Aorta (tissue), 5 donors: ENCODE measurements at regions of chr18 and their contacts with region 1.

Region 1: DNA sequence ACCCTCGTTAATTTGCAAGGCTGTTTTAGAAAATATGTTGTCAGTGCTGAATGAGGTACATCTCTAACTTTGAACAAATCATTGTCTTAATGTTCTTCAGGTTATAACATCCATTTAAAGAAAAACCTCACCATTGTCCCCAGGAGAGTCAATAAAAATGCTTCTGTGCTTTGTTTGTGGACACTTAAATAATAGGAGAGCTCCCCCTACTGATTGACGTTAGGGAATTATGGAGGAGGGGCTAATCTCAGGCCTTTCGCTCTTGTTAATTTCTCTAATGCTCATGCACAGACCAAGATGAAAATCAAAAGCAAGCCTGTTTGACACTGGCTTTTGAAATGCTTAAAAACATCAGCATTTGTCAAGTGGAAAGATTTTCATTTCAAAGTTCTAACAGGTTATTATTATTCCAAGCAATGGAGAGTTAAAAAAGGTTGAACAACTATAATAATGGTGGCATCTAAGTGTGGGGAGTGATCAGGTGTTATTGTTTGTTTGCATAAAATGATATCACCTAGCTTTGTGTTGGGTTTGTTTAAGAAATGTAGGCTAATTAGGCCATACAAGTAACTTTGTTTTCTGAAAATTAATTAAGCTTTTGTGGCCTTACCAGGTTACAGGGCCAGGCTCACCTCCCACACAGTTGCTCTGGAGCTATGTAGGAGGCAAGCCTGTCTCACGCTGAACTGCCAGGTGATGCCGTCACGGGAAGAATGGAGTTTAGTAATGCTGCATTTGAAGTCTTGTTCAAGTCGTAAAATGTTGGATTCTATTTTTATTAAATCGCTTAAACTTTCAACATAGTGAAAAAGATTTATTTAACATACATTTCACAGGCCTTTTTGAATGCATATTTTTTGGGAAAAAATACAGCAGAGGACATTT is 51.7 kb upstream of the SMIM21 start:
- DNase-seq: no peak
- ATAC-seq: no peak
- H3K4me3 ChIP-seq: no peak overlapping the region
- H3K27ac ChIP-seq: no peak overlapping the region
- H3K4me1 ChIP-seq: no peaks in the 10 kb centered on the region
- H3K27me3 ChIP-seq: no peaks in the 10 kb centered on the region

Region 2: GRCh38 chr18:75130591-75131328 is 348.5 kb before region 1 on chr18:
- intact Hi-C with region 1: loop called in 1 of 2 experiments (anchors 10 kb)
- DNase-seq: no peak
- ATAC-seq: no peak
- H3K4me3 ChIP-seq: no peak overlapping the region
- H3K27ac ChIP-seq: no peak overlapping the region
- H3K4me1 ChIP-seq: no peaks in the 10 kb centered on the region
- H3K27me3 ChIP-seq: no peaks in the 10 kb centered on the region

Region 3: DNA sequence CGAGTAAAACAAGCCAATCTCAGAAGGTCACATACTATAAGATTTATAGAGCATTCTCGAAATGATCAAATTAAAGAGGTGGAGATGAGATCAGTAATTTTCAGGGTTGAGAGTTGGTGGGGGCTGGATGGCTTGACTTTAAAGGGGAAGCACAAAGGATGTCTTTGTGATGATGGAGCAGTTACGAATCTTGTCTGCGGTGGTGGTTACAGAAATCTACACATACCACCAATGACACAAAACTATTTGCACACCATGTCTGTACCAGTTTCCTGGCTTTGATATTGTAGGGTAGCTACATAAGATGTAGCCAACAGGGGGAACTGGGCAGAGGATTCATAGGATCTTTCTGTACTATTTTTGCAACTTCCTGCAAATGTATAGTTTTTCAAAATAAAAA is 138.9 kb after region 1 on chr18:
- intact Hi-C with region 1: no loop called
- DNase-seq: no peak
- ATAC-seq: no peak
- H3K4me3 ChIP-seq: no peak overlapping the region
- H3K27ac ChIP-seq: no peak overlapping the region
- H3K4me1 ChIP-seq: no peaks in the 10 kb centered on the region
- H3K27me3 ChIP-seq: no peaks in the 10 kb centered on the region